Activated B cell treated with CpG ODN at 0.5 μM for 24 hours (primary cell): ENCODE measurements at regions of chr10 and their contacts with region 1.

Region 1: DNA sequence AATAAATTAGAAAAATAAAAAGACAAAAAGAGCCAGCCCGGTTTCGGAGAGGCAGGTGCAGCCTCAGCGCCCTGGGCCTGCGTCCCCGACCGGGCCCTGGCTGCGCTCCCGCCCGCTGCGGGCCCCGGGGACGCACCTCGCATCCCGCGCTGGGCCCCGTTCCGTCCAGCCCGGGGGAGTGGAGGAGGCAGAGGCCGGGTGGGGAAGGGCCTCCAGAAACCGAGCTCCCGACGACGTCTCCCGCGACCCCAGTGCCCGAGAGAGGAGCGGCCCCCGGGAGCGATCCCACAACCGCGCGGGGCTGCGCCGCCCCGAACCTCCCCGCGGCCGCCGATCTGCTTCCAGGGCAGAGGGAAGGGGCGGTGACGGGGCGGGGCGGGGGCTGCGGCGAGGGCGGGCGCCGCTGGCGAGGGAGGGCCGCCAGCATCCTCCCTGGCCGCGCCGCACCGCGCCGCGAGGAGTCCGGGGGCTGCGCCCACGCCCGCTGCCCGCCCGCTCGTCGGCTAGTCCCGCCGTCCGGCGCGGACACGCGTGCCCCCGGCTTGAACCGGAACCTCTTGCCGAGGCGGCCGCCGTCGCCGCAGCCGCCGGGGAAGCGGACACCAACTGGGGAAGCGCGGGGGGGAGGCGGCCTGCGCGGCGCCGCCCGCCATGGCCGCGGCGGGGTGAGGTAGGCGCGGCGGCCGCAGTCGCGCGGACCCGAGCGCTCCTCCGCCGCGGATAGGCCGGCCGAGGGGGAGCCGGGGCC is at the start of gene CCNY:
- DNase-seq: peak; percentile 79
- ATAC-seq: peak; percentile 86
- H3K4me3 Mint-ChIP-seq: peak within 1 kb of the TSS; percentile 88
- H3K27ac Mint-ChIP-seq: peak within 1 kb of the TSS; percentile 74
- H3K4me1 Mint-ChIP-seq: peaks cover 63% of the 10 kb centered on the region
- H3K27me3 Mint-ChIP-seq: no peaks in the 10 kb centered on the region
- CTCF ChIP-seq: no peak
- total RNA-seq, gene CCNY: 68.5 and 69.2 TPM in 2 replicates

Region 2: DNA sequence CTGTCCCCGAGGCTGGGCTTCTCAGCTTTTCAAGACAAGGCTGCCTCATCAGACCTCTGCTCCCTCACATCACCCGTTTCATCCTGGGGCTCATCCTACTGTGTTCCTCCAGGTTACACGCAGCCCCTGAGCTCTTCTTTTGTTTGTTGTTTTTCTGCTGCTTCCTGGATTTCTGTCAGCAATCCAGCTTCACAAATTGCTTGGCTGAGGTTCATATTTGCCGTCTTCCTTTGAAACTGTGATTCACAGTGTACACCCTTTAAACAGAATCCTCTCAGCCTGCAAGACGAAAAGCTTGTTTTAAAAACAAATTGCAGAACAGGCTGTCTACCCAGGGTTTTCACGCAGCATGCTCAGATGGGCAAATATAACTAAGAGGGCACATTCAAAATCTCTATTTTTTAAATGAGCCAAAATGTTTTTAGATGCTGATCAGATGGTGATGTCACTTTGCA is 482.1 kb before region 1 on chr10:
- CTCF ChIA-PET with region 1: no interaction called
- POLR2A ChIA-PET with region 1: no interaction called
- intact Hi-C with region 1: no loop called
- DNase-seq: no peak
- ATAC-seq: no peak
- H3K4me3 Mint-ChIP-seq: no peak overlapping the region
- H3K27ac Mint-ChIP-seq: no peak overlapping the region
- H3K4me1 Mint-ChIP-seq: no peaks in the 10 kb centered on the region
- H3K27me3 Mint-ChIP-seq: peaks cover 2% of the 10 kb centered on the region
- CTCF ChIP-seq: no peak

Region 3: DNA sequence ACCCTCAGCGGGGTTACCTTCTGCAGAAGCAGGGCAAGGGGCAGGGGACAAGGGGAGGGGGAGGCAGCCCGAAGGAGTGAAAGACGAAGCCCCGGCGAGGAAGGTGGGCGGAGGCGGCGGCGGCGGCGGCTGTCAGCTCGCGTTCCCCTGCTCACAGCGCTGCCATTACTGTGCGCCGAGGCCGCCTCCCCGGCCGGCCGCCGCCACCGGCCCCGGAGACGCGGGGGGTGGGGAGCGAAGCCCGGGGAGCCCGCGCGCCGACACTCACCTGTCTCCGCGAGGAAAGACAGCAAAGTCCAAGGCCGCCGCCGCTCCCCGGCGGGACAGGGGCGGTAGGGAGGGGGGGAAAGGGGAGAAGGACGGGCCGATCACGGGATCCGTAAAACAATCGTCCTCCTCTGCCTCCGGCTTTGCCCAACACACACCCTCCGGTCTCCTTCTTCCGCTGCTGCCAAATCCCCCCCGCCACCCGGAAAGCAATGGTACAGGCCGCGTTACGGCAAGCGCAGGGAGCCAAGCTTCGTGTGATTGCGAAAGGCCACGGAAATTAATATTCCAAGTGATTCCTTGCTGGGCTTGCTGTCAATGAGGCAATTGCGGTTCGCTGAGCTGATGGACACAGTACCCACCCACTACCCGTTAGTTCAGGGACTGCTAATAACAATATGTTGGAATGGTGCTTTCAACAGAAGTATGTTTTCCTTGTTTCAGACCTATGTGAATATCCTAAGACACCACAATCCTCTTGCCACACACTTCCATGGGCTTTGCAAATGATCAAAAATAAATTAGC is 245.9 kb before region 1 on chr10 and contains the start of gene CUL2:
- CTCF ChIA-PET with region 1: no interaction called
- POLR2A ChIA-PET with region 1: interaction called, 3 read pairs
- intact Hi-C with region 1: loop called (anchors 1 kb)
- DNase-seq: peak; percentile 89
- ATAC-seq: peak; percentile 96
- H3K4me3 Mint-ChIP-seq: peak within 1 kb of the TSS; percentile 98
- H3K27ac Mint-ChIP-seq: peak within 1 kb of the TSS; percentile 98
- H3K4me1 Mint-ChIP-seq: peaks cover 52% of the 10 kb centered on the region
- H3K27me3 Mint-ChIP-seq: peaks cover under 1% of the 10 kb centered on the region
- CTCF ChIP-seq: no peak
- total RNA-seq, gene CUL2: 32.7 and 33.7 TPM in 2 replicates

Region 4: GRCh38 chr10:35236739-35237138 is 99.5 kb before region 1 on chr10:
- CTCF ChIA-PET with region 1: no interaction called
- POLR2A ChIA-PET with region 1: no interaction called
- intact Hi-C with region 1: loop called (anchors 10 kb)
- DNase-seq: no peak
- ATAC-seq: no peak
- H3K4me3 Mint-ChIP-seq: no peak overlapping the region
- H3K27ac Mint-ChIP-seq: no peak overlapping the region
- H3K4me1 Mint-ChIP-seq: no peaks in the 10 kb centered on the region
- H3K27me3 Mint-ChIP-seq: no peaks in the 10 kb centered on the region
- CTCF ChIP-seq: no peak

Region 5: DNA sequence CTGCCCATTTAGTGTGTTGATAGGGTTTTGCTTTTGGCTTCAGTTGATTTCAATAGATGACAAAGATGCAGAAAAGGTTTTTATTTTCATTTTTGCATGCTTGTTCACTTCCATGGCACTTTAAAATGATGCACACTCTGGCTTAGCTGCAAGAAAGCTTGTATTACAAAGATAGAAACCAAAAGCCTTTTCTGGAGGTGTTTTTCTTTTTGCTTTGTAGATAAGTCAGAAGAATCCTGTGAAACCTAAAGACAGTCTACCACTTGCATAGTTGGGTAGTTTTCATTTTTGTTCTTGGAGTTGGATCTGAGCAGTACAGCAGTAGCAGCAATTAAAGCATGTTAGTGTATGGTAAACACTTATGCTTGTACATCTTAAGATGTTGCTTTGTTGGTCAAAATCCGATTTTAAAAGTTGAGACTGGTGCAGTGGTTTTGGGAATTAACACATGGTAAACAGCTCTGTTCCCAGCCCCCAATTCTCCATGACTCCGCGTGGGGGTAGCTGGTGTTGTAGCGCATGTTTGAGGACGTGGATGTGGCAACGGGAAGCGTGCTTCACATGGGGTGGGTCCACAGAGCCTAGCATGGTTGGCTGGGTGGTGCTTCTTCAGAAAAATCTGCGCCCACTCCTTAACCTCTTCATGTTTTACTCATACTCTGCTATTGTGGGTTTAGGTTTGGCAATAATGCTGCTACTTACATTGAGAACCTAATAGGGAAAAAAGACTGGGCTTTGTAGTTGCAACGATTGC is 19.9 kb after region 1 on chr10:
- CTCF ChIA-PET with region 1: no interaction called
- POLR2A ChIA-PET with region 1: interaction called, 9 read pairs
- intact Hi-C with region 1: loop called (anchors 2 kb)
- DNase-seq: no peak
- ATAC-seq: no peak
- H3K4me3 Mint-ChIP-seq: no peak overlapping the region
- H3K27ac Mint-ChIP-seq: peak overlapping the region; percentile 3
- H3K4me1 Mint-ChIP-seq: peaks cover 81% of the 10 kb centered on the region
- H3K27me3 Mint-ChIP-seq: no peaks in the 10 kb centered on the region
- CTCF ChIP-seq: no peak

Region 6: GRCh38 chr10:35495521-35496119 is 159.4 kb after region 1 on chr10:
- CTCF ChIA-PET with region 1: no interaction called
- POLR2A ChIA-PET with region 1: no interaction called
- intact Hi-C with region 1: loop called (anchors 5 kb)
- DNase-seq: no peak
- ATAC-seq: peak; percentile 62
- H3K4me3 Mint-ChIP-seq: peak overlapping the region; percentile 65
- H3K27ac Mint-ChIP-seq: peak overlapping the region; percentile 89
- H3K4me1 Mint-ChIP-seq: peaks cover 80% of the 10 kb centered on the region
- H3K27me3 Mint-ChIP-seq: no peaks in the 10 kb centered on the region
- CTCF ChIP-seq: no peak